WTC11 (cell line): ENCODE measurements at regions of chr12 and their contacts with region 1.

Region 1: GRCh38 chr12:120228291-120229070 is 27.6 kb upstream of the RPLP0 start:
- DNase-seq: peak; percentile 96
- ATAC-seq: peak; percentile 62
- H3K4me3 Mint-ChIP-seq: peak overlapping the region; percentile 55
- H3K27ac Mint-ChIP-seq: peak overlapping the region; percentile 98
- H3K4me1 Mint-ChIP-seq: peaks cover 78% of the 10 kb centered on the region
- H3K27me3 Mint-ChIP-seq: no peaks in the 10 kb centered on the region; the same call in 1 of the 2 replicates
- CTCF ChIP-seq: peak; percentile 73

Region 2: GRCh38 chr12:119222222-119222951 is 1006.1 kb before region 1 on chr12:
- CTCF ChIA-PET with region 1: no interaction called
- POLR2A ChIA-PET with region 1: no interaction called
- DNase-seq: no peak
- ATAC-seq: no peak
- H3K4me3 Mint-ChIP-seq: no peak overlapping the region
- H3K27ac Mint-ChIP-seq: no peak overlapping the region
- H3K4me1 Mint-ChIP-seq: peaks cover 46% of the 10 kb centered on the region
- H3K27me3 Mint-ChIP-seq: no peaks in the 10 kb centered on the region; the same call in 1 of the 2 replicates
- CTCF ChIP-seq: no peak

Region 3: GRCh38 chr12:119885549-119885948 is 342.9 kb before region 1 on chr12:
- CTCF ChIA-PET with region 1: no interaction called
- POLR2A ChIA-PET with region 1: no interaction called
- DNase-seq: no peak
- ATAC-seq: no peak
- H3K4me3 Mint-ChIP-seq: no peak overlapping the region
- H3K27ac Mint-ChIP-seq: no peak overlapping the region
- H3K4me1 Mint-ChIP-seq: no peaks in the 10 kb centered on the region
- H3K27me3 Mint-ChIP-seq: peaks cover 9% of the 10 kb centered on the region
- CTCF ChIP-seq: no peak

Region 4: GRCh38 chr12:120093592-120094355 is 134.7 kb before region 1 on chr12:
- CTCF ChIA-PET with region 1: no interaction called
- POLR2A ChIA-PET with region 1: no interaction called
- DNase-seq: peak; percentile 85
- ATAC-seq: peak; percentile 84
- H3K4me3 Mint-ChIP-seq: no peak overlapping the region
- H3K27ac Mint-ChIP-seq: peak overlapping the region; percentile 85; the same call in 1 of the 2 replicates
- H3K4me1 Mint-ChIP-seq: peaks cover 36% of the 10 kb centered on the region
- H3K27me3 Mint-ChIP-seq: no peaks in the 10 kb centered on the region
- CTCF ChIP-seq: no peak

Region 5: DNA sequence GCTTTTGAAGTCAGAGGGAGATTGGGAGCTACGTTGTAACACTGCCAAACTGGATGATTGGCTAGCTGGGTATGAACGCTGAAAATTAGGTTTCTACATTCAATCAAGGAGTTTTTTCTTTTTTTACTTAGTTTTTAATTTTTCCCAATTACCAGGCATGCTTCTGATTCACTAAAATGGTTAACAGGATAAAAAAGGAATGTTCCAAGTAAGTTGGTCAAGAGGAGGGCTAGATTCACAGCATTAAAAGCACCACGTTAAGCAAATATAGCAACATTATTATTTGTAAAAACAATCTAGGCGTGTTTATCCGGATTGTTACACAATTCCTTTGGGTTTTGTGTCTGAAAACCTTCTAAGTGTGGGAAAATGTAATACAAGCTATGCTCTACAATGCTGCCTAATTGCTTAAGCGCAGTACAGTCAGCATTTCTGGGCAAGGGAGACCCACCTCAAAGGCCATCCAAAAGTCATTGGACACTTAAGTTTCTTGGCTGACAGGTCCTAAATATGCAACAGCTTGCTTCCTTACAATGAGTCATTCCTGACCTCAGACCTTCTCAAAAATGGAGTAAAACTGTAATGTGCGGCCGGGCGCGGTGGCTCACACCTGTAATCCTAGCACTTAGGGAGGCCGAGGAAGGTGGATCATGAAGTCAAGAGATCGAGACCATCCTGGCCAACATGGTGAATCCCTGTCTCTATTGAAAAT is 28.7 kb before region 1 on chr12:
- CTCF ChIA-PET with region 1: interaction called, 86 read pairs
- POLR2A ChIA-PET with region 1: interaction called, 97 read pairs
- DNase-seq: no peak
- ATAC-seq: no peak
- H3K4me3 Mint-ChIP-seq: peak overlapping the region; percentile 97
- H3K27ac Mint-ChIP-seq: peak overlapping the region; percentile 99
- H3K4me1 Mint-ChIP-seq: peaks cover 27% of the 10 kb centered on the region
- H3K27me3 Mint-ChIP-seq: no peaks in the 10 kb centered on the region
- CTCF ChIP-seq: no peak

Region 6: GRCh38 chr12:120242275-120242799 is 13.9 kb after region 1 on chr12:
- CTCF ChIA-PET with region 1: interaction called, 717 read pairs
- POLR2A ChIA-PET with region 1: interaction called, 6 read pairs
- DNase-seq: no peak
- ATAC-seq: no peak
- H3K4me3 Mint-ChIP-seq: no peak overlapping the region
- H3K27ac Mint-ChIP-seq: no peak overlapping the region; the same call in 1 of the 2 replicates
- H3K4me1 Mint-ChIP-seq: peaks cover 51% of the 10 kb centered on the region
- H3K27me3 Mint-ChIP-seq: no peaks in the 10 kb centered on the region
- CTCF ChIP-seq: no peak

Region 7: GRCh38 chr12:120286796-120287465 is 58.5 kb after region 1 on chr12:
- CTCF ChIA-PET with region 1: interaction called, 145 read pairs
- POLR2A ChIA-PET with region 1: interaction called, 157 read pairs
- DNase-seq: no peak
- ATAC-seq: no peak
- H3K4me3 Mint-ChIP-seq: no peak overlapping the region
- H3K27ac Mint-ChIP-seq: no peak overlapping the region
- H3K4me1 Mint-ChIP-seq: peaks cover 20% of the 10 kb centered on the region
- H3K27me3 Mint-ChIP-seq: no peaks in the 10 kb centered on the region; the same call in 1 of the 2 replicates
- CTCF ChIP-seq: no peak

Region 8: GRCh38 chr12:120317224-120318105 is 89.0 kb after region 1 on chr12:
- CTCF ChIA-PET with region 1: interaction called, 12 read pairs
- POLR2A ChIA-PET with region 1: interaction called, 5 read pairs
- DNase-seq: peak; percentile 100
- ATAC-seq: peak; percentile 98
- H3K4me3 Mint-ChIP-seq: peak overlapping the region; percentile 80
- H3K27ac Mint-ChIP-seq: peak overlapping the region; percentile 68
- H3K4me1 Mint-ChIP-seq: peaks cover 11% of the 10 kb centered on the region
- H3K27me3 Mint-ChIP-seq: peaks cover 5% of the 10 kb centered on the region
- CTCF ChIP-seq: no peak